ENCODE measurements at regions of chr3 and their contacts with region 1.

Region 1: DNA sequence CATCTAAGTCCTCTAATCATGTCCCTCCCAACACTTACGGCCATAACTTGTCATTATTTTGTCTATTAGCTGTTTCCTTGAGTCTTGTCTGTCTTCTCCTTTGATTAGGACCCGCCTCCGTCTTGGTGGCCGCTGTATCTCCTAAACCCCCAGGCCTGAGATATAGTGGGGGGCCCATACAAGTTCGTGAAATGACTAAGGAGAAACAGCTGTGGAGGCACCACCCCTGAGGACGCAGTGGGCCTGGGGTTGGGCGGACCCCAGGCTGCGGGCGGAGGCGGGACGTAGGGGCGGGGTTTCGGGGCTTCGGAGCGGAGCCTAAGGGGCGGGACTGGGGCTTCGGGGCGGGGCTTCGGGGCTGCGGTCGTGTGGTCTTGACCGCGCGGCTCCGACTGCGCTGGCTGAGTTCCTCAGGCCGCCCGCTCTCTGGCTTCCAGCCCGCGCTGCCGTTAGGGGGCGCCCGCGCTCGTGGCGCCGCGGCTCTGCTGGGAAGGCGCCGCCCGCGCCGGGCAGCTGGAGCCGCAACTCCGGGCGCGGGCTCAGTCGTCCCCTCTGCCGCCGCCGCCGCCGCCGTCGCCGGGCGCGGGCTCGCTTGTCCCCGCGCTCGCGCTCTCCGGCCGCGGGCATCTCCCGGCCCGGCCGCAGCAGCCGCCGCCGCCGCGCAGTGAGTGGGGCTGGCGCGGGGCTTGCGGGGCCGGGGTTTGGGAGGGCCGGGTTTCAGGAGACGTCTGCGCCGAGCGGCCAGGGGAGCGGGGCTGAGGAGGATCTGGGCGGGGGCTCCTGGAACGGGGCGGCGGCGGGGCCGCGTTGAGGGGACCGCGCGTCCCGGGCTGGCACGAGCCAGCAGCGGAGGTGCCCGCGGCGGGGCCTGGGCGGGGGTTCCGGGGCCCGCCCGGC is at the start of gene KCTD6:
- DNase-seq: peak; percentile 88
- H3K4me3 ChIP-seq: peak within 1 kb of the TSS; percentile 48 to 66 (median 65)
- H3K27ac ChIP-seq: no peak within 1 kb of the TSS
- H3K4me1 ChIP-seq: peaks cover 19% of the 10 kb centered on the region
- H3K27me3 ChIP-seq: peaks cover 6% of the 10 kb centered on the region
- CTCF ChIP-seq: peak; percentile 48 to 66
- total RNA-seq, gene KCTD6: 2.7 to 5.6 TPM

Region 2: DNA sequence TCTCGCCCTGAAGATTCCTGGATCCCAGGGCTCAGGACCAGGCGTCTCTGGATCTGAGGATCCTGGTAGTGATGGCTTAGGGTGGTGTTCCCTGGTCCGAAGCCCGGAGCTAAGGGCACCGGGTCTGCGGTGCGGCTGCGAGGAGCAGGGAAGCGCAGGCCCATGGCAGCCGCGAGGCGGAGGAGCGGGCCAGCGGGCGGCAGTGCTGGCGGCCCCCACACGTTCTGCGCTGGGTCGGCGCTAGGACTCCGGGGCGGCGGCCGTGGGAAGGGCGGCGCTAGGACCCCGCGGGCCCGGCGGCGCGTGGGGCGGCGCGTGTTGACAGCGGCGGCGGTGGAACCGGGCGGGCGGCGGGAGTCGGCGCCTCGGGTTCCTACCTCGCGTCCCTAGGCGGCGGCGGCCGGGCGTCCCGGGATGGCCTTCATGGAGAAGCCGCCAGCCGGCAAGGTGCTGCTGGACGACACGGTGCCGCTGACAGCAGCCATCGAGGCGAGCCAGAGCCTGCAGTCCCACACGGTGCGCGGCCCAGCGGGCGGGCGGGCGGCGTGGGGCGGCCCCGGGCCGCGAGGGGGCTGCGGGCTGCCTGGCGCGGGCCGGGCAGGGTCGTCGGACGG is 159.1 kb before region 1 on chr3 and contains the start of gene PXK:
- CTCF ChIA-PET with region 1: no interaction called
- dilution Hi-C with region 1: no loop called
- in situ Hi-C with region 1: no loop called
- intact Hi-C with region 1: loop called (anchors 1 kb)
- DNase-seq: peak; percentile 75
- H3K4me3 ChIP-seq: peak within 1 kb of the TSS; percentile 79 to 85 (median 84)
- H3K27ac ChIP-seq: no peak within 1 kb of the TSS
- H3K4me1 ChIP-seq: peaks cover 34% of the 10 kb centered on the region
- H3K27me3 ChIP-seq: no peaks in the 10 kb centered on the region
- CTCF ChIP-seq: peak in 1 of 2 donors; percentile 5
- total RNA-seq, gene PXK: 39.6 to 42.2 TPM

Region 3: DNA sequence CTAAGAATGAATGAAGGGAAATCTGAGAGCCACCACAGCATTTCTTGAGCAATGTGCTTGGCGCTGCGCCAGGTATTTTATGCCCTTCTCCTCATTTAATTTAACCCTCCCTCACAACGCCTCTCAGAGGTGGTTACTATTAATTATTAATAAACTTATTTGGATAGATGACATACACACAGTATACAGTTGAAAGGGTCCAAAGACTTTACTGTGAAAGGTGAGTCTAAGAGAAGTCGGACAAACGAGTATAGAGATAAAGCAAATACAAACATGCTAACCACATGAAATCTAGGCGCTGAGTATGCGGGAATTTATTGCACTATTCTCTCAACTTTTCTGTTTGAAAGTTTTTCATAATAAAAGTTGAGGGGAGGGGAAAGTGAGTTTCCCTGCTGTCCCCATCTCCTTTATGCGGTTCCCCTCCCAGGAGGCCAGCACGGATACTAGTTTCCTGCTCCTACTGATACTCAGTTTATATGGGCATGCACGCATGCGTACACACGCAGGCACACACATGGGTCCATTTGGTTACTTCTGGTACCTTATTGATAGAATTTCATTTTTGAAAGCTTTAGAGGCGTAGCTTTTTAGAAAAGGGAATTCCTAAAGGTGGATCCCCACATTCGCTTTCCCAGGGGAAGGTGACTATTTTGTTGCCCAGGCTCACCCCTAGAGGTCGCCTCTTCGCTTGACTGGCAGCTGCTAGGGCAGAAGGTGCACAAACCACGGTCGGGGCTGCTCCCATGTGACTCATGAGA is 28.4 kb before region 1 on chr3:
- CTCF ChIA-PET with region 1: no interaction called
- dilution Hi-C with region 1: loop called (anchors 5 kb)
- in situ Hi-C with region 1: no loop called
- intact Hi-C with region 1: no loop called
- DNase-seq: peak; percentile 90
- H3K4me3 ChIP-seq: no peak overlapping the region
- H3K27ac ChIP-seq: no peak overlapping the region
- H3K4me1 ChIP-seq: peaks cover 17% of the 10 kb centered on the region
- H3K27me3 ChIP-seq: peaks cover 4% of the 10 kb centered on the region
- CTCF ChIP-seq: peak; percentile 91 to 96

Region 4: GRCh38 chr3:58526515-58526957 is 34.8 kb after region 1 on chr3:
- CTCF ChIA-PET with region 1: no interaction called
- dilution Hi-C with region 1: loop called (anchors 5 kb)
- in situ Hi-C with region 1: no loop called
- intact Hi-C with region 1: loop called (anchors 1 kb)
- DNase-seq: peak; percentile 92
- H3K4me3 ChIP-seq: no peak overlapping the region
- H3K27ac ChIP-seq: no peak overlapping the region
- H3K4me1 ChIP-seq: peaks cover 26% of the 10 kb centered on the region
- H3K27me3 ChIP-seq: no peaks in the 10 kb centered on the region
- CTCF ChIP-seq: no peak

Region 5: GRCh38 chr3:58577269-58577821 is 85.6 kb after region 1 on chr3 and contains the start of gene FAM107A:
- CTCF ChIA-PET with region 1: no interaction called
- dilution Hi-C with region 1: no loop called
- in situ Hi-C with region 1: no loop called
- intact Hi-C with region 1: no loop called
- DNase-seq: no peak
- H3K4me3 ChIP-seq: no peak within 1 kb of the TSS
- H3K27ac ChIP-seq: no peak within 1 kb of the TSS
- H3K4me1 ChIP-seq: peaks cover 3% of the 10 kb centered on the region
- H3K27me3 ChIP-seq: peaks cover 4% of the 10 kb centered on the region
- CTCF ChIP-seq: no peak
- total RNA-seq, gene FAM107A: under 0.01 TPM in 1 of 2 donors, not detected in the other

Region 6: GRCh38 chr3:58630076-58630709 is 138.4 kb after region 1 on chr3:
- CTCF ChIA-PET with region 1: no interaction called
- dilution Hi-C with region 1: no loop called
- in situ Hi-C with region 1: no loop called
- intact Hi-C with region 1: loop called (anchors 1 kb)
- DNase-seq: peak; percentile 43
- H3K4me3 ChIP-seq: no peak overlapping the region
- H3K27ac ChIP-seq: no peak overlapping the region
- H3K4me1 ChIP-seq: no peaks in the 10 kb centered on the region
- H3K27me3 ChIP-seq: peaks cover 2% of the 10 kb centered on the region
- CTCF ChIP-seq: peak; percentile 76 to 93